Panc1 (cell line): ENCODE measurements at regions of chr11 and their contacts with region 1.

Region 1: GRCh38 chr11:69039501-69039900 is 9.2 kb upstream of the TPCN2 start:
- DNase-seq: no peak
- ATAC-seq: no peak
- H3K4me3 ChIP-seq: no peak overlapping the region
- H3K27ac ChIP-seq: no peak overlapping the region
- H3K4me1 ChIP-seq: peaks cover 5% of the 10 kb centered on the region; the same call in 1 of the 2 replicates
- H3K27me3 ChIP-seq: no peaks in the 10 kb centered on the region
- CTCF ChIP-seq: no peak

Region 2: DNA sequence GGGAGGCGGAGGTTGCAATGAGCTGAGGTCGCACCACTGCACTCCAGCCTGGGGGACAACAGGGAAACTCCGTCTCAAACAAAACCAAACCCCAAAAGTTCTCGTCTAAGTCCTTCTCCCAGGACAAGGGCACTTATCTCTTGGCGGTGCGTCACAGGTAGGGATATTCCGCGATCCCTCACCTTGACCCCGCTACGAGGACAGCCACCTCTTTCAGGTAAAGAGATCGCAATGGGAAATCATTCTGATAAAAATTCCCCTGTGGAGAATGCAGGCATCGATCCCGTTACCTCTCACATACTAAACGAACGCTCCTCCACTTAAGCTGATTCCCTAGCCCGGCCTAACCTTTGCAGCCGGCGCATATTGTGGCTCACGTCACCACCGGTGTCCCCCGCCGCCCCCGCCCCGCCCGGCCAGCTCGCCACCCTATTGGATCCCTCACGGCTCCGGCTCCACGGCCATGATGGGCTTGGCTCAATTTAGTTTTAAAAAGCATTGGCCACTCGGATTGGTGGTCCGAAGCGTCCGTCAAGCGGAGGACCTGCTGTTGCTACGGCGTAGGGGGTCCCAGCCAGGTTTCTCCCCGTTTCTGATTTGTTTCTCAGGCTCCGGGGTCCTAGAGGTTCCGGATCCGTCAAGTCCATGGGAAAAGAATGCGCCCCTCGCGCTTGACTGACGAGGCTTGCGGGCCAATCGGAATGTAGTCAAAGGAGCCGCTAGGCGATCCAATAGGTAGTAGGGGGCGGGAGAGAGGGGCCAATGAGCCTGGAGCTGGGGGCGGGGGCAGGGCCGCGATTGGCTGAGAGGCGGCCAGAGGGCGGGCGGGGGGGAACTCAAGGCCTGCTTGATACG is 579.4 kb before region 1 on chr11:
- CTCF ChIA-PET with region 1: no interaction called
- POLR2A ChIA-PET with region 1: interaction called, 11 read pairs
- in situ Hi-C with region 1: no loop called
- intact Hi-C with region 1: no loop called
- DNase-seq: peak; percentile 96
- ATAC-seq: peak; percentile 90
- H3K4me3 ChIP-seq: peak overlapping the region; percentile 57 to 74
- H3K27ac ChIP-seq: peak overlapping the region; percentile 95
- H3K4me1 ChIP-seq: peaks cover 38% of the 10 kb centered on the region
- H3K27me3 ChIP-seq: no peaks in the 10 kb centered on the region
- CTCF ChIP-seq: no peak

Region 3: GRCh38 chr11:69265911-69266510 is 226.5 kb after region 1 on chr11:
- CTCF ChIA-PET with region 1: no interaction called
- POLR2A ChIA-PET with region 1: no interaction called
- in situ Hi-C with region 1: no loop called
- intact Hi-C with region 1: no loop called
- DNase-seq: no peak
- ATAC-seq: no peak
- H3K4me3 ChIP-seq: no peak overlapping the region
- H3K27ac ChIP-seq: no peak overlapping the region
- H3K4me1 ChIP-seq: no peaks in the 10 kb centered on the region
- H3K27me3 ChIP-seq: no peaks in the 10 kb centered on the region
- CTCF ChIP-seq: no peak

Region 4: GRCh38 chr11:69540118-69540502 is 500.6 kb after region 1 on chr11:
- CTCF ChIA-PET with region 1: no interaction called
- POLR2A ChIA-PET with region 1: no interaction called
- in situ Hi-C with region 1: no loop called
- intact Hi-C with region 1: no loop called
- DNase-seq: no peak
- ATAC-seq: peak; percentile 60; the same call in 1 of the 2 replicates
- H3K4me3 ChIP-seq: no peak overlapping the region
- H3K27ac ChIP-seq: no peak overlapping the region
- H3K4me1 ChIP-seq: peaks cover 5% of the 10 kb centered on the region; the same call in 1 of the 2 replicates
- H3K27me3 ChIP-seq: no peaks in the 10 kb centered on the region
- CTCF ChIP-seq: no peak